Mammary epithelial cell (primary cell): ENCODE measurements at regions of chr18 and their contacts with region 1.

Region 1: GRCh38 chr18:62584241-62585120 is 61.7 kb downstream of the ZCCHC2 start:
- DNase-seq: peak; percentile 67
- H3K4me3 ChIP-seq: no peak overlapping the region
- H3K27ac ChIP-seq: no peak overlapping the region
- H3K4me1 ChIP-seq: peaks cover 6% of the 10 kb centered on the region
- H3K27me3 ChIP-seq: no peaks in the 10 kb centered on the region
- CTCF ChIP-seq: peak; percentile 98 to 99

Region 2: GRCh38 chr18:61908661-61909060 is 675.8 kb before region 1 on chr18:
- CTCF ChIA-PET with region 1: no interaction called
- dilution Hi-C with region 1: no loop called
- in situ Hi-C with region 1: no loop called
- intact Hi-C with region 1: no loop called
- DNase-seq: peak; percentile 93
- H3K4me3 ChIP-seq: no peak overlapping the region
- H3K27ac ChIP-seq: peak overlapping the region; percentile 77
- H3K4me1 ChIP-seq: peaks cover 21% of the 10 kb centered on the region
- H3K27me3 ChIP-seq: no peaks in the 10 kb centered on the region
- CTCF ChIP-seq: peak in 1 of 2 donors; percentile 17

Region 3: GRCh38 chr18:62324917-62325805 is 259.3 kb before region 1 on chr18 and contains the start of gene TNFRSF11A:
- CTCF ChIA-PET with region 1: no interaction called
- dilution Hi-C with region 1: no loop called
- in situ Hi-C with region 1: no loop called
- intact Hi-C with region 1: loop called (anchors 1 kb)
- DNase-seq: peak; percentile 58
- H3K4me3 ChIP-seq: peak within 1 kb of the TSS; percentile 54 to 71 (median 64)
- H3K27ac ChIP-seq: no peak within 1 kb of the TSS
- H3K4me1 ChIP-seq: peaks cover 14% of the 10 kb centered on the region
- H3K27me3 ChIP-seq: peaks cover 3% of the 10 kb centered on the region
- CTCF ChIP-seq: peak; percentile 7 to 47
- total RNA-seq, gene TNFRSF11A: 0.50 to 6.1 TPM

Region 4: GRCh38 chr18:62458346-62458745 is 126.1 kb before region 1 on chr18:
- CTCF ChIA-PET with region 1: interaction called, 9 read pairs
- dilution Hi-C with region 1: no loop called
- in situ Hi-C with region 1: no loop called
- intact Hi-C with region 1: loop called (anchors 1 kb)
- DNase-seq: peak; percentile 12
- H3K4me3 ChIP-seq: no peak overlapping the region
- H3K27ac ChIP-seq: no peak overlapping the region
- H3K4me1 ChIP-seq: no peaks in the 10 kb centered on the region
- H3K27me3 ChIP-seq: no peaks in the 10 kb centered on the region
- CTCF ChIP-seq: peak in 1 of 2 donors; percentile 40

Region 5: DNA sequence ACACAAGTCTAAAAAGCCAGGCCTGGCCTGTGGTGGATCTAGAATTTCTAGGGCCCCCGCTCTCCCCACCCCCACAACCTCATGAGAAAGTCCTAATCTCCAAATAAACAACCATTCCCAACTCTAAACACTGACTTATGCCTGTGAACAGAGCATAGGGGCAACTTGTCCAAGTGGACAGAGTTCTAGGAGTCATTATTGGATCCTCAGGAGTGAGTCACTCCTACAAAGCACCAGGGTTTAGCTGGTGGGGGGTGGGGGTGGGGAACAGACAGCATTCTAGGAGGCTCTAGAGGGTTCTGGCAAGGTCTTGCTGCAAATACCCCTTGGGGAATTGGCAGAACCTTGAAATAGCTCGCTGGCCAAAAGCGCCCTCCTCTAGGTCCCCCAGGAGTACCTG is 21.6 kb after region 1 on chr18:
- CTCF ChIA-PET with region 1: no interaction called
- dilution Hi-C with region 1: no loop called
- in situ Hi-C with region 1: no loop called
- intact Hi-C with region 1: no loop called
- DNase-seq: no peak
- H3K4me3 ChIP-seq: no peak overlapping the region
- H3K27ac ChIP-seq: no peak overlapping the region
- H3K4me1 ChIP-seq: no peaks in the 10 kb centered on the region
- H3K27me3 ChIP-seq: peaks cover under 1% of the 10 kb centered on the region
- CTCF ChIP-seq: no peak

Region 6: DNA sequence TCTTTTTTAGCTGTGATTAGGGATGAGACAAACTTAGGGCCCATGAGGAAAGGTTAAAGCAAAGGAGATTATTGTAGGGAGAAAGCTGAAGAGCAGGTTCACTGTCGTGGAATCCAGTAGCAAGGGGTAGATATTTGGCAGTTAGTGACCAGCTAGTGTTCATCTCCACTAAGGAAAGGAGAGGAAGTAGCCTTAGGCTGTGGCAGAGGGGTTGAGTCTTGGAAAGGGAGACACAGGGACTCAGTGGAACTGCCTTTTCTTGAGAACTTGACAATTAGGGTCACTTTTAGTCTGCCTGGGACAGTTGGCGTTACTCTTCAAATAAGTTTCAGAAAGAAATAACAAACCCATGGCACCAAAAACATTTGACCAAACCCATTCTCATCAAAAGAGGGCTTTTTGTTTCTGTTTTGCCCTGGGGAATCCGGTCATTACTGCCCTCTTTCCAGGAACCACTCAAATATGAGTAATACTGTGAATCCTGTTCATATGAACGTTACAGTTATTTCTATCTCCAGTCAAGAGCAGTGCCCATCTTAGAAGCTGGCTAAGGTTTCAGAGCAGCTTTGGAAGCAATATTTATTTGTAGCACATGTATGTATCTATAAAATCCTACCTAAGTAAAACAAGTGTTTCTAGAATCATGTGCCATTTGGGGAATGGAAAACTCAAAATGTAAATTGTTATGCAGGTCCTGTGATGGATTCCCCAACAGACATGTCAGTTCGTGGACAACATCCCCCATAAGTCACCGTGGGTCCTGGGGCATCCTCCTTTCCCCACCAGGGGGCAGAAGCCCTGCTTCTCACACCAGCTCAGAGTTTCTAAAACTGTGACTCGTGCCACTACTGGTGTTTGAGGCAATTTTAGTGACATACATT is 53.6 kb after region 1 on chr18:
- CTCF ChIA-PET with region 1: no interaction called
- dilution Hi-C with region 1: no loop called
- in situ Hi-C with region 1: no loop called
- intact Hi-C with region 1: loop called (anchors 5 kb)
- DNase-seq: peak; percentile 9
- H3K4me3 ChIP-seq: no peak overlapping the region
- H3K27ac ChIP-seq: no peak overlapping the region
- H3K4me1 ChIP-seq: peaks cover 18% of the 10 kb centered on the region
- H3K27me3 ChIP-seq: no peaks in the 10 kb centered on the region
- CTCF ChIP-seq: peak; percentile 67 to 70

Region 7: GRCh38 chr18:62957885-62958472 is 373.5 kb after region 1 on chr18:
- CTCF ChIA-PET with region 1: no interaction called
- dilution Hi-C with region 1: no loop called
- in situ Hi-C with region 1: no loop called
- intact Hi-C with region 1: loop called (anchors 1 kb)
- DNase-seq: peak; percentile 19
- H3K4me3 ChIP-seq: no peak overlapping the region
- H3K27ac ChIP-seq: no peak overlapping the region
- H3K4me1 ChIP-seq: no peaks in the 10 kb centered on the region
- H3K27me3 ChIP-seq: no peaks in the 10 kb centered on the region
- CTCF ChIP-seq: peak; percentile 14 to 50